ENCODE measurements at regions of chr12 and their contacts with region 1.

Region 1: DNA sequence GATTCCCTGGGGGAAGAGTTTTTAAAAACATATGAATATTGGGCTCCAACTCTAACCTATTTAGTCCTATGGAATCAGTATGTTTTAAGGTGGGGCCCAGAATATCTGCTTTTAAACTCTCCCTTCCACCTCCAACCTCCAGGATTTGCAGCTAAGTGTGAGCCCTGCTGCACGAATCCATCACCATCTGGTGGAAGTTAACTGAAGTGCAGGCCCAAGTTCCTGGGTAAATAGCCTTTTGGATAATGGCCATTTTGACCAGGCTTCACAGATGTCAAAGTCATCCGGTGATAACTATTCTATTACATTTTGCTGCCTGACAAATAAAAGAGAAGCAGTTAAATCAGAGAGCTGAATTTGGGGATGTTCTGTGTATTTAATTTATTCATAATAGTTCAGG is 58.1 kb upstream of the RMST start:
- DNase-seq: peak; percentile 12
- ATAC-seq: 0 out of 2 replicates have a peak, but pooled peaks have one; percentile 72
- H3K4me3 ChIP-seq: no peak overlapping the region
- H3K27ac ChIP-seq: no peak overlapping the region
- H3K4me1 ChIP-seq: no peaks in the 10 kb centered on the region
- H3K27me3 ChIP-seq: no peaks in the 10 kb centered on the region
- CTCF ChIP-seq: peak; percentile 88

Region 2: GRCh38 chr12:97435153-97435552 is 30.6 kb after region 1 on chr12:
- CTCF ChIA-PET with region 1: no interaction called
- POLR2A ChIA-PET with region 1: no interaction called
- in situ Hi-C with region 1: no loop called
- intact Hi-C with region 1: loop called (anchors 2 kb)
- DNase-seq: no peak
- ATAC-seq: no peak
- H3K4me3 ChIP-seq: no peak overlapping the region
- H3K27ac ChIP-seq: no peak overlapping the region
- H3K4me1 ChIP-seq: no peaks in the 10 kb centered on the region
- H3K27me3 ChIP-seq: no peaks in the 10 kb centered on the region
- CTCF ChIP-seq: no peak